ENCODE measurements at regions of chr13 and their contacts with region 1.

Region 1: DNA sequence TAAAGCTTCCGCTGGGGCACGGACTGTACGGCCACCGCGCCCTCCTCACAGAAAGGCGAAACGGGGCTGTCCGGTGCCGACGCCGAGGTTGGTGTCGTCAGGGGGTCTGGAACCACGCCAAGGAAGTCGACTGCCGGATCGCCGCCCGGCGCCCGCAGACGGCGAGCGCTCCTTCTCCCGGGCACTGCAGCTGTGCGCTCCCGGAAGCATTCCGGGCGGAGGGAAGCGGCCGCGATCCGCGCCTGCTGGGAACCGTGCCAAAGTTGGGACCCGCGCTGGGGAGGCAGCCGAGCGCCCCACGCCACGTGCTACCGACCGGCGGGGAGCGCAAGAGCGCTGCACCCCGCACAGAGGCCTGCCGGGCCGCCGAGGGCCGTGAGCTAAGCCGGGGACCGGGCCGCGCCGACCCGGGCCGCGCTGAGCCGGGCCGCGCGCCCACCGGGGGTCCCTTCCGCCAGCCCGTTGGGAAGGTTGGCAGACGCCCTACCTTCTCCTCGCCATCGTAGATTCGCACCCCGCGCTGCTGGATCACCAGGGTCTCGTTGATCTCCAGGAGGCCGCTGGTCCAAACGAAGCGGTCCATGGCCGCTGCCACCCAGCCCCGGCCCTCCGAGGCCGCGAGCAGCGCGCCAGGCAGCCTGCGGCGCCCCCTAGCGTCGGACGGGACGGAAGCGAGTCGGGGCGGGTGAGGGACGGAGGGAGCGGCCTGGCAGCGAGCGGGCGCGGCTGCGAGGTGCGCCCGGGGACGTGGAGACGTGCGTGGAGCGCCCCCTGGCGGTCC is at the start of gene VPS36:
- DNase-seq: peak; percentile 95 to 98 (median 97)
- H3K4me3 ChIP-seq: peak within 1 kb of the TSS; percentile 54 to 98 (median 94)
- H3K27ac ChIP-seq: peak within 1 kb of the TSS; percentile 90 to 92
- H3K4me1 ChIP-seq: peaks cover 22 to 40% (median 31%) of the 10 kb centered on the region in 4 experiments
- H3K27me3 ChIP-seq: no peaks in the 10 kb centered on the region

Region 2: GRCh38 chr13:52348983-52349780 is 101.0 kb before region 1 on chr13:
- CTCF ChIA-PET with region 1: interaction called, 40 read pairs
- POLR2A ChIA-PET with region 1: no interaction called
- DNase-seq: peak in 2 of 3 donors; percentile 27 to 37
- H3K4me3 ChIP-seq: no peak overlapping the region
- H3K27ac ChIP-seq: no peak overlapping the region
- H3K4me1 ChIP-seq: peaks cover 0 to under 1% (median 0%) of the 10 kb centered on the region in 4 experiments
- H3K27me3 ChIP-seq: no peaks in the 10 kb centered on the region

Region 3: GRCh38 chr13:52405767-52406494 is 44.3 kb before region 1 on chr13 and contains the start of gene THSD1:
- CTCF ChIA-PET with region 1: interaction called, 15 read pairs
- POLR2A ChIA-PET with region 1: no interaction called
- DNase-seq: peak in 2 of 3 donors; percentile 29 to 45
- H3K4me3 ChIP-seq: peak within 1 kb of the TSS; percentile 41 to 78 (median 65)
- H3K27ac ChIP-seq: no peak within 1 kb of the TSS
- H3K4me1 ChIP-seq: peaks cover 0 to 23% (median 22%) of the 10 kb centered on the region in 4 experiments
- H3K27me3 ChIP-seq: peaks cover 3 to 16% (median 5%) of the 10 kb centered on the region in 5 experiments

Region 4: GRCh38 chr13:52428295-52428694 is 21.9 kb before region 1 on chr13:
- CTCF ChIA-PET with region 1: interaction called, 14 read pairs
- POLR2A ChIA-PET with region 1: interaction called, 7 read pairs
- DNase-seq: peak; percentile 26 to 71 (median 47)
- H3K4me3 ChIP-seq: peak overlapping the region in 2 of 7 experiments; percentile 13 to 48
- H3K27ac ChIP-seq: peak overlapping the region in 1 of 2 experiments; percentile 64
- H3K4me1 ChIP-seq: peaks cover 0 to 18% (median 4%) of the 10 kb centered on the region in 4 experiments
- H3K27me3 ChIP-seq: no peaks in the 10 kb centered on the region